HCT116 (cell line): ENCODE measurements at regions of chr11 and their contacts with region 1.

Region 1: GRCh38 chr11:123630126-123630608 is 24.3 kb downstream of the SCN3B start:
- DNase-seq: no peak
- ATAC-seq: no peak
- H3K4me3 ChIP-seq: no peak overlapping the region
- H3K27ac ChIP-seq: no peak overlapping the region
- H3K4me1 ChIP-seq: no peaks in the 10 kb centered on the region
- H3K27me3 ChIP-seq: peaks cover 30% of the 10 kb centered on the region
- CTCF ChIP-seq: no peak
- POLR2A ChIP-seq: no peak
- RAD21 ChIP-seq: no peak

Region 2: DNA sequence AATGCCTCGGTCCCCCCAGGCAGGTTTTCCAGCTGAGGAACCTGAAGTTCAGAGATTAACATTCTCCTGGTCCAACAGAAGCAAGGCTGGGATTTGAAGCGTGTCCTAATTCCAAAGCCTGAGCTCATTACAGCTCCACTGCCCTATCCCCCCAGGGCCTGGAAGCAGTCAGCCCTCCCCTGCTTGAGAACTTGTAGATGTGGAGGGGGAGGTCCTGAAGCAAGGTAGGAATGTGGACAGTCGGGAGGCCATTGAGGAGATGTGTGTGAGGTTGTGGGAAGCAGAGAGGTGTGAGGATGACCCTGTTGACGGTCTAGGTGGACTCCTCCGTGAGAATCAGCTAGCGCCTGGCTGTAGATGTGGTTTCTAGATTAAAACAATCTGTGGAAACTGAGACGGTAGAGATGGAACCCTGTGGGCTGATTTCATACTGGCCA is 192.0 kb before region 1 on chr11:
- CTCF ChIA-PET with region 1: no interaction called
- POLR2A ChIA-PET with region 1: no interaction called
- RAD21 ChIA-PET with region 1: no interaction called
- intact Hi-C with region 1: no loop called
- DNase-seq: no peak
- ATAC-seq: no peak
- H3K4me3 ChIP-seq: no peak overlapping the region
- H3K27ac ChIP-seq: no peak overlapping the region
- H3K4me1 ChIP-seq: no peaks in the 10 kb centered on the region
- H3K27me3 ChIP-seq: no peaks in the 10 kb centered on the region
- CTCF ChIP-seq: no peak
- POLR2A ChIP-seq: no peak
- RAD21 ChIP-seq: no peak

Region 3: GRCh38 chr11:123597859-123598258 is 32.3 kb before region 1 on chr11:
- CTCF ChIA-PET with region 1: no interaction called
- POLR2A ChIA-PET with region 1: no interaction called
- RAD21 ChIA-PET with region 1: no interaction called
- intact Hi-C with region 1: loop called (anchors 5 kb)
- DNase-seq: no peak
- ATAC-seq: peak; percentile 58; the same call in 1 of the 2 replicates
- H3K4me3 ChIP-seq: no peak overlapping the region
- H3K27ac ChIP-seq: no peak overlapping the region
- H3K4me1 ChIP-seq: no peaks in the 10 kb centered on the region
- H3K27me3 ChIP-seq: no peaks in the 10 kb centered on the region
- CTCF ChIP-seq: peak in 2 of 3 experiments; percentile 19 to 44; a peak in 3 of 6 replicates
- POLR2A ChIP-seq: no peak
- RAD21 ChIP-seq: no peak